CD8-positive, alpha-beta memory T cell (primary cell): ENCODE measurements at regions of chr2 and their contacts with region 1.

Region 1: DNA sequence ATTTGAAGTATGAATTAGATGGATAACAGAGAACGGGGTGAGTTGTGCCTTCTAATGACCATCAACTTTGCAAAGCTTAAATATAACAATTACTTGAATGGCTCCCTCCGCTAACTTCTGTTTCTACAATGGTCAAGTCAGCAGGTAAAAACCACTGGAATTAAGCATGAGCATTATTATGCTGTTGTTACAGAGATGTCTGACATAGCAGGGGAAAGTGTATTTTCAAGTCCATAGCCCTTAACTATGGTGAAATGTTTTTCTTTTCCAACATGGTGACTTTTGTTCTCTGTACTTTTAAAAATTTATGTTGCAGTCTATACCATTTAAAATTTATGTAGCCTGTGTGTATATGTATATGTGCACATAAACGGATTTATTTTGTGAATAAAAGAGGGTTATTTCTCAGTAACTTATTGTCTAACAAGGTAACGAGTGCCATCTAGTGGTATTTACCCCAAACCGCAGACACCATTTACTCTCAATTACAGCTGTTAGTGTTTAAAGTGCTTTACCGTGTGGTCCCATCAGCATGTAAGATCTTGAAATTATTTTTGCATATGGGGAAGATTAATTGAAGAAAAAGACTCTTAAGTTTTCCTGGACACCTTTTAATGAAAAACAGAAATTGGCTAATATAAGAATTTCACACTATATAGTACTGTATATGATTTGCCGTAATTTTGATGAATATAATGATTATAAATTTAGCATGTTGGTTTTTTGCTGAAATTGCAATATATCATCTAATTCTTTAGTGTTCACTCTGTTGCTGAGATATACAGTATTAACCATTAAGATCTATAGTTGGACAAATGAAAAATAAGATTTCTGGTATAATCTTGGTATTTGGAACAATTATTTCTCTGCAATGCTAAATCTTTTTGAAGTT is 78.2 kb downstream of the UBE2E3 start:
- DNase-seq: peak in 4 of 5 donors; percentile 22 to 56 (median 37)
- H3K4me3 ChIP-seq: no peak overlapping the region
- H3K4me3 Mint-ChIP-seq: no peak overlapping the region
- H3K27ac ChIP-seq: no peak overlapping the region
- H3K27ac Mint-ChIP-seq: no peak overlapping the region
- H3K4me1 ChIP-seq: no peaks in the 10 kb centered on the region
- H3K4me1 Mint-ChIP-seq: peaks cover 9 to 14% (median 9%) of the 10 kb centered on the region in 3 donors
- H3K27me3 ChIP-seq: no peaks in the 10 kb centered on the region
- H3K27me3 Mint-ChIP-seq: no peaks in the 10 kb centered on the region

Region 2: GRCh38 chr2:181046833-181047232 is 11.8 kb before region 1 on chr2:
- CTCF ChIA-PET with region 1: interaction called, 14 read pairs
- POLR2A ChIA-PET with region 1: no interaction called
- DNase-seq: no peak
- H3K4me3 ChIP-seq: no peak overlapping the region
- H3K4me3 Mint-ChIP-seq: no peak overlapping the region
- H3K27ac ChIP-seq: no peak overlapping the region
- H3K27ac Mint-ChIP-seq: no peak overlapping the region
- H3K4me1 ChIP-seq: no peaks in the 10 kb centered on the region
- H3K4me1 Mint-ChIP-seq: peaks cover 5 to 15% (median 11%) of the 10 kb centered on the region in 3 donors
- H3K27me3 ChIP-seq: no peaks in the 10 kb centered on the region
- H3K27me3 Mint-ChIP-seq: no peaks in the 10 kb centered on the region